ENCODE measurements at regions of chr1 and their contacts with region 1.

Region 1: DNA sequence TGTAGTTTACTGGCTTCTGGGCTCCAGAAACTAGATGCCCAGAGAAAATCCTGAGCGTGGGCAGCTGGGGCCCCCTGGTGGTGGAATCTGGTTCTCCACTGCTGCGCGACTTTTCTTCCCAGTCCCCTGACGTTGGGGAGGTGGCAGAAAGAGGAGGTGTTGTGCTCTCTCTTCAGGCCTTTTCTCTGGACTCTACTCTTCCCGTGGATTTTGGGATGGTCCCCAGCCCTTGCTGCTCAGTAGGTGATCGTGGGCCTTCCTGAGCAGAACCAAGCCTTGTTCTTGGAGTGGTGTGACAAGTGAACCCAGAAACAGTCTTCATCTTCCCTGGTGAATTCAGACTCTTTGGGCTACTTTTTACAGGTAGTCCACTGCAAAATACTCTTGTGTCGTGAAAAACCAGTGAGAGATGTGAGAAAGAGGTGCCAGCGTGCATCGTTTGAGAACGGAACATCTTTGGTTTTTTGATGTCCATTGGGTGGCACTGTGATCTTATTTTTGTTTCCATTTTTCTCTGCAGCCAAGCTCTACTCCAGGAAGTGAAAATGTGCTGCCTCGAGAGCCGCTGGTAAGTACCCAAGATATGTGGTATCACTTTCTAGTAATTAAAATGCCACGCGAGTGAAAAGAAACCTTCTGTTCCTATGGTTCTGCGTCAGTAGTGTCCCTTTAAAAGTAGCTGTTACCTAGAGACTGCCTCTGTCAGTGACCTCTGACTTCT is 20.2 kb downstream of the PEX14 start:
- DNase-seq: peak; percentile 61
- ATAC-seq: peak; percentile 95
- H3K4me3 ChIP-seq: no peak overlapping the region; the same call in 1 of the 2 replicates
- H3K27ac ChIP-seq: no peak overlapping the region
- H3K4me1 ChIP-seq: peaks cover 5% of the 10 kb centered on the region
- H3K27me3 ChIP-seq: no peaks in the 10 kb centered on the region
- CTCF ChIP-seq: peak; percentile 93
- POLR2A ChIP-seq: no peak
- RAD21 ChIP-seq: peak; percentile 84

Region 2: GRCh38 chr1:10430216-10431069 is 64.5 kb before region 1 on chr1 and contains the start of gene CENPS:
- CTCF ChIA-PET with region 1: interaction called, 12 read pairs
- POLR2A ChIA-PET with region 1: no interaction called
- dilution Hi-C with region 1: no loop called
- in situ Hi-C with region 1: no loop called
- intact Hi-C with region 1: loop called (anchors 1 kb)
- DNase-seq: peak; percentile 83
- ATAC-seq: peak; percentile 95
- H3K4me3 ChIP-seq: peak within 1 kb of the TSS; percentile 76
- H3K27ac ChIP-seq: peak within 1 kb of the TSS; percentile 86
- H3K4me1 ChIP-seq: peaks cover 2% of the 10 kb centered on the region; the same call in 1 of the 2 replicates
- H3K27me3 ChIP-seq: no peaks in the 10 kb centered on the region
- CTCF ChIP-seq: peak; percentile 98
- POLR2A ChIP-seq: no peak; the same call in 1 of the 2 replicates
- RAD21 ChIP-seq: peak; percentile 66
- total RNA-seq, gene CENPS: 9.9 and 11.4 TPM in 2 replicates

Region 3: GRCh38 chr1:10438677-10439163 is 56.2 kb before region 1 on chr1:
- CTCF ChIA-PET with region 1: interaction called, 3 read pairs
- POLR2A ChIA-PET with region 1: no interaction called
- dilution Hi-C with region 1: no loop called
- in situ Hi-C with region 1: no loop called
- intact Hi-C with region 1: loop called (anchors 2 kb)
- DNase-seq: peak; percentile 32
- ATAC-seq: peak; percentile 96
- H3K4me3 ChIP-seq: no peak overlapping the region
- H3K27ac ChIP-seq: no peak overlapping the region
- H3K4me1 ChIP-seq: peaks cover 2% of the 10 kb centered on the region; the same call in 1 of the 2 replicates
- H3K27me3 ChIP-seq: no peaks in the 10 kb centered on the region
- CTCF ChIP-seq: no peak
- POLR2A ChIP-seq: no peak
- RAD21 ChIP-seq: no peak

Region 4: GRCh38 chr1:10484521-10484920 is 10.4 kb before region 1 on chr1:
- CTCF ChIA-PET with region 1: interaction called, 10 read pairs
- POLR2A ChIA-PET with region 1: no interaction called
- dilution Hi-C with region 1: no loop called
- in situ Hi-C with region 1: no loop called
- intact Hi-C with region 1: no loop called
- DNase-seq: no peak
- ATAC-seq: no peak
- H3K4me3 ChIP-seq: no peak overlapping the region
- H3K27ac ChIP-seq: no peak overlapping the region
- H3K4me1 ChIP-seq: no peaks in the 10 kb centered on the region; the same call in 1 of the 2 replicates
- H3K27me3 ChIP-seq: no peaks in the 10 kb centered on the region
- CTCF ChIP-seq: no peak
- POLR2A ChIP-seq: no peak
- RAD21 ChIP-seq: no peak

Region 5: GRCh38 chr1:10838541-10838940 is 343.6 kb after region 1 on chr1:
- CTCF ChIA-PET with region 1: no interaction called
- POLR2A ChIA-PET with region 1: no interaction called
- dilution Hi-C with region 1: no loop called
- in situ Hi-C with region 1: no loop called
- intact Hi-C with region 1: no loop called
- DNase-seq: no peak
- ATAC-seq: no peak
- H3K4me3 ChIP-seq: no peak overlapping the region
- H3K27ac ChIP-seq: no peak overlapping the region
- H3K4me1 ChIP-seq: no peaks in the 10 kb centered on the region
- H3K27me3 ChIP-seq: peaks cover 47% of the 10 kb centered on the region
- CTCF ChIP-seq: no peak
- POLR2A ChIP-seq: no peak
- RAD21 ChIP-seq: no peak